ENCODE measurements at regions of chr7 and their contacts with region 1.

Region 1: GRCh38 chr7:150876817-150877526 is 24.7 kb downstream of the AOC1 start:
- DNase-seq: peak in 5 of 6 donors; percentile 45 to 76 (median 57)
- ATAC-seq: peak; percentile 90 to 93 (median 91)
- H3K4me3 ChIP-seq: no peak overlapping the region
- H3K27ac ChIP-seq: no peak overlapping the region
- H3K4me1 ChIP-seq: no peaks in the 10 kb centered on the region
- H3K27me3 ChIP-seq: peaks cover 0 to 8% (median 0%) of the 10 kb centered on the region in 4 donors
- CTCF ChIP-seq: peak in 2 of 4 donors; percentile 36 to 39

Region 2: DNA sequence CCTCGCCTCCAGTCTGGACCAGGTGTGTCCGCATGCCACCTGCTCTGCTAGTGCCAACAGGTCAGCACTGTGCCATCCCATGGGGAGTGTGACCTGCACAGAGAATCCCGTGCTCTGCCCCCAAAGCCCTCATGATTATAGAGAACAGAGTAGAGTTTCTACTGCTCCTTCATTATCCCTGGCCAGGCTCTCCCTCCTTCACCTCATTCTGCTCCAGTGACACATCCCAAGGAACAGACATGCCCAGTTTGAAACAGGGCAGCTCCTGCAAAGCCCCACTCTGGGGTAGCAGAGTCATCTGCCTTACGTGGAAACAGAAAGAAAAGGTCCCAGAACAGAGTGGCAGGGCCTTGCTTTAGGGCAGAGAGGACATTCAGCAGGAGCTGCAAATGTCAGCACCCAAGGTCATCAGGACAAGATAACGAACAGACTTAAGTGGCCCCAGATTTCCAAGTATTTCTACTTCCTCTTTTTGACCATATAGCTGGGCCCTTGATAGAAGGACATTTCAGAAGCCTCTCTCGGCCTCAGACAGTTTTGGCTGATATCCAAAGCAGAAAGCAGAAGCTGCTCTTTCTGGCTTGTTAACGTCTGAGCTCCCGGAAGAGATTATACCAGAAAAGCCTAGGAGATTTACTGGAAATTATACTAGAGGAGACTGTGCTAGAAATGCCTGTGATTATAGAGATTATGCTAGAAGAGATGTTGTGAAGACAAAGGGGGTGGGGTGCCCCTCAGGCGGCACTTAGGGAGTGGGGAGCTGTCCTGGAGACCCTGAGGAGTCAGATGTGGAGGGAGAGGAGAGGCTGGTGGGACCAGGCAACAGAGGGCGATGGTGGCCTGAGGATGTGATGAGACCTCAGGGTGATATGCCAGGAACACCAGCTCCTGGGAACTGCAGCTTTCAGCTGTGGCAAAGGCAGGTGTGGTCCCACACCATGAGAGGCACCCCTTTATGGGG is 89.4 kb before region 1 on chr7:
- intact Hi-C with region 1: loop called in 1 of 3 experiments (anchors 5 kb)
- DNase-seq: no peak
- ATAC-seq: peak in 3 of 4 donors; percentile 43 to 48 (median 45)
- H3K4me3 ChIP-seq: no peak overlapping the region
- H3K27ac ChIP-seq: peak overlapping the region in 2 of 4 donors; percentile 28 to 60
- H3K4me1 ChIP-seq: peaks cover 0 to 12% (median 0%) of the 10 kb centered on the region in 3 donors
- H3K27me3 ChIP-seq: no peaks in the 10 kb centered on the region
- CTCF ChIP-seq: no peak

Region 3: GRCh38 chr7:150962553-150963399 is 85.8 kb after region 1 on chr7:
- intact Hi-C with region 1: no loop called
- DNase-seq: peak in 4 of 6 donors; percentile 47 to 82 (median 64)
- ATAC-seq: peak; percentile 73 to 91 (median 86)
- H3K4me3 ChIP-seq: no peak overlapping the region
- H3K27ac ChIP-seq: no peak overlapping the region
- H3K4me1 ChIP-seq: no peaks in the 10 kb centered on the region
- H3K27me3 ChIP-seq: no peaks in the 10 kb centered on the region
- CTCF ChIP-seq: peak; percentile 40 to 69 (median 64)

Measured in pancreas (tissue), 10 donors.